Activated T-helper 2 cell treated with anti-CD3 and anti-CD28 coated beads, Interferon-gamma antibody, Interleukin-2, Interleukin-4, amounts not matched to agents 10 μg/mL and 5 μg/mL and 100 μg/mL, durations not matched to agents 14 hours and 24 hours and 36 hours (primary cell): ENCODE measurements at regions of chr4 and their contacts with region 1.

Region 1: DNA sequence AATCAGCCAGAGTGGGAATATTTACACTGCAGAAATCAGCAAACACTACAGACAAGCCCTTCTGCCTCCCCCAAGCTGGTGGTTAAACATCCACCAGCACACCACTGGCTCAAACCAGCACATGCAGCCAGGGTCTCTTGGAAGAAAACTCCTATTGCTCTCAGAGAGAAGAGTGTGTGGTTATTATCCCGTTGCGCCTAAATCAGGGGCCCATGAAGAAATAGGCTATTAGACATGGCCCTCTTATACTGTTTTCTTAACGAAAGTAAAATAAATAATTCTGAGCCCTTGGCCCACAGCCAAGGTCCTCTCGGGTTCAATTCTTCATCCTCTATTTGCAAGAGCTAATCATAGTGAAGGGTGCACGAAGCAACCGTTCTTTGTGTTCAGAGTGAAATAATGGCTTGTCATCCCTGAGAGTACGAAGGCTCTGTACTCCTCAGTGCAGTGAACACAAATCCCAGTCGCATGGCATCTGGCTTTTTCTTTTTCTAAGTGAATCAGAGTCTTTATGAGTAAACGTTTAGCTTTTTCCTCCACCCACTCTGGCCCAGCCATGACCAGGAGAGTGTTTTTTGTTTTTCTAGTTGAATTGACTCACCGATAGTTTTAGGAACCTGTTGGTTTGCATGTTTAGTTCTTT is 33.4 kb upstream of the RBM47 start:
- DNase-seq: no peak
- H3K4me3 Mint-ChIP-seq: no peak overlapping the region
- H3K27ac Mint-ChIP-seq: peak overlapping the region; percentile 85
- H3K4me1 Mint-ChIP-seq: peaks cover 30% of the 10 kb centered on the region
- H3K27me3 Mint-ChIP-seq: no peaks in the 10 kb centered on the region

Region 2: DNA sequence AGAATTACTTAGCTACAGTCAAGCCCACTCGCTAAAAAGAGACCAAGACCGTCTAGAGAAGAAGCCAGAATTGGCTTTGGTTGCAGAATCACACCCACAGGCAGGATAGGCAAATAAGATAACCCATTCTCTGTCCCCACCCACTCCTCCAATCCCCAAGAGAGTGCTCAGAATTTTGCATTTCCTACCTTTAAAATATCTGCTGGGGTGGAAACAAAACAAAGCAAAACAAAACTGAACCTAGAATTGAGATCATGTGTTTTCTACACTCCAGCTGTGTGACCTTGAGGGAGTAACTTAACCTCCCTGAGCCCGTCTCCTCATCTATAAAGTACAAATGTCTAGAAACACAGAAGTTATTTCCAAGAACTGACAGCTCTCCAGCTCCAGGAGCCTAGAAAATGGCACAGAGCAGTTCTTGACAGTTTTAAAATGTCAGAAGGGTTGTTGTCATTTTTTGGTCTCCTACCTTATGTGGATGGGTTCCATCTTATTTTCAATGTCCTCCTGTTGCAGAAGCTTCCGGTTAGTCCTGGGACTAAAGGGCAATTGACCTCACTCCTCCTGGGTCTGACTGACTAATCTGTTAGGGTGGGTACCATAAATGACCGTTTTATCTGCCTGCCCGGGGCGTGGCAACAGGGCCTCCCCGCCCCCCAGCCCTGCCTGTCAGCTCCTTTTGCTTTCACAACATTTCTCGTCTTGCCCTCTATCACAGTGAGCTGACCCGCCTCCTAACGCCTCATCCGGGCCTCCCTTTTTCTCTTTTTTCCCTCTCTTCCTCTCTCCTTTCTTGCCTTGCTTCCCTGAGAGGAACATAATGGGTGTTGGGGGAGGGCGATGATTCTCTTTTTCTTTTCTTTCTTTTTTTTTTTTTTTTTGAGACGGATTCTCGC is 147.4 kb before region 1 on chr4:
- intact Hi-C with region 1: loop called (anchors 1 kb)
- DNase-seq: no peak
- H3K4me3 Mint-ChIP-seq: no peak overlapping the region
- H3K27ac Mint-ChIP-seq: peak overlapping the region; percentile 68
- H3K4me1 Mint-ChIP-seq: peaks cover 32% of the 10 kb centered on the region
- H3K27me3 Mint-ChIP-seq: no peaks in the 10 kb centered on the region

Region 3: DNA sequence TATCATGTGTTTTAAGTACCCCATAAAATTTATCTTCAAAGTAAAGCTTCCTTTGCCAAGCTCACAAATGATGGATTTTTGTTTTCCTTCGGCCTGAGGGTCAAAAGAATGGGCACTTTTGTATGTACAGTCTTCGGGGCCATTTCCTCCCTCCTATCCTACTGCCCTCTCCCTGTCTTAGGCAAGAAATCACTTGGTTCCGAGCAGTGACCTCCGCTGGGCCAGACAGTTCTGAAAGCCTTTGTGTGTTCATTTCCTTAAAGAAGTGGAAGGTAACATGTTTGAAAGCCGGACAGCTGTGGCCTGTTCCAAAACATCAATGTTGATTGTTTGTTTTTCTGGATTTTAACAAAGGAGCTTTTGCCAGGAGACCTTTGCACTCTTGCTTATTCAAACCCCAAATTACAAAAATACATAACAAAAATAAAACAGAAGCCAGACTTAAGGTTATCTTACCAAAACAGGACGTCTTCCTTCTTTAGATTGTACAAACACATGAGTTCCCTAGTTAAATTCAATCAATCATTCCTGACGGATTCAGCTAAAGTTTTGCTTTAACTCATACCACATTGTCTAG is 764.3 kb after region 1 on chr4:
- intact Hi-C with region 1: no loop called
- DNase-seq: no peak
- H3K4me3 Mint-ChIP-seq: no peak overlapping the region
- H3K27ac Mint-ChIP-seq: no peak overlapping the region
- H3K4me1 Mint-ChIP-seq: no peaks in the 10 kb centered on the region
- H3K27me3 Mint-ChIP-seq: no peaks in the 10 kb centered on the region